ENCODE measurements at regions of chr3 and their contacts with region 1.

Region 1: DNA sequence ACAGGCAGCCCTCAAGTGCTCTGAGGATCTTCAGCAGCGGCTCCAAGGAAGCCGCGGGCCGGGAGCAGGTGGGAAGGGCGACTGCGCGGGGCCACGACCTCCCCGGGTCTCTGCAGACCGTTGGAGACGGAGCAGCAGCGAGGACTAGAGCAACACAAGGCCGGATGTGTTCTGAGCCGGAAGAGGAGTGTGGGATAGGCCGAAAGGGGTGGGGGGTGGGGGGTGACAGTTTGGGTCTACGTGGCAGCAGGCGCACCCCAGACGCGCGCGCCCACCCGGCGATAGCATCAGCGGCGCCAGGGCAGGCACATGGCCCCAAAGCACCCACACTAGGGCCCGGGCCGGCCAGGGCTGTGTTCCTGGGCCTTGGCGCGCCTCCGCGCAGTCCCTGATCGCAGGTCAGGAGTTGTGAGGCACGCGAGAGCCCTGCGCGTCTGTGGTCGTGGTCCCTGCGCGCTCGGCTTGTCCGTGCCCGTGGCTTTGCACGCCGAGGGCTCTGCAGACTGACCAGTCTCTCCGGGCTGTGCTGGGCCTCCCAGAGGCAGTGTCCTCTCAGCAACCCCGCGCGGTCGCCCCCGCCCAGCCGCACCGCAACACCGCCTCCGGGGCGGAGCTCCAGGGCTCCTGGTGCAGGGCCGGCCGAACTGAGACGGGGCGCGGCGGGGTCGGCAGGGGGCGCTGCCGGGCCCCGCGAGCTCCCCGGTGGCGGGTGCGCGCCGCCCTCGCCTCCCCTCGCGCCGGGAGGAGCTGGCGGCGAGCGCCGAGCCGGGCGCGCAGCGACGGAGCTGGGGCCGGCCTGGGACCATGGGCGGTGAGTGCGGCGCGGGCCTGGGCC is at the start of gene PXYLP1:
- DNase-seq: peak; percentile 95
- ATAC-seq: peak; percentile 92
- H3K4me3 Mint-ChIP-seq: peak within 1 kb of the TSS; percentile 94
- H3K27ac Mint-ChIP-seq: peak within 1 kb of the TSS; percentile 98
- H3K4me1 Mint-ChIP-seq: peaks cover 48% of the 10 kb centered on the region
- H3K27me3 Mint-ChIP-seq: no peaks in the 10 kb centered on the region
- total RNA-seq, gene PXYLP1: 10.3 to 12.2 TPM

Region 2: DNA sequence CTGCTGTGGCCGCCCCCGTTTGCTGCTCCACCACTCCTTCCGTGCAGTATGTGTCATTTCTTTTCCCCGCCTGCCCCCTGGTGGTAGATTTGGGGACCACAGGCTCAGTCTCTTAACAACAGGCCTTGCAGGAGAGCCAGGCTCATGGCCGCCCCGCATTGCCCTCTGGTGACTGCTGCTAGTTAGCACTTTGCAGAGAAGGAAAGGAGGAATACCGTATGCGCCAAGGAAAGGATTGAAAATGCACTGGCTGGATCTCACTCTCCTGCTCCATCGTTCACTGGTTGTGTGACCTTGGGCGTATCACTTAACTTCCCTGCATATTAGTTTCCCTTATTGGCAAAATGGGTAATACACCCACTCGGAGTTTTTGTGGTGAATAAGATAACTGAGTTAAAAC is 39.0 kb before region 1 on chr3:
- CTCF ChIA-PET with region 1: interaction called, 4 read pairs
- POLR2A ChIA-PET with region 1: no interaction called
- intact Hi-C with region 1: loop called in 1 of 2 experiments (anchors 1 kb)
- DNase-seq: peak; percentile 98
- ATAC-seq: peak; percentile 100
- H3K4me3 Mint-ChIP-seq: no peak overlapping the region
- H3K27ac Mint-ChIP-seq: no peak overlapping the region
- H3K4me1 Mint-ChIP-seq: peaks cover 13% of the 10 kb centered on the region
- H3K27me3 Mint-ChIP-seq: peaks cover 2% of the 10 kb centered on the region

Region 3: GRCh38 chr3:141266797-141267555 is 35.7 kb after region 1 on chr3:
- CTCF ChIA-PET with region 1: interaction called, 13 read pairs
- POLR2A ChIA-PET with region 1: interaction called, 9 read pairs
- intact Hi-C with region 1: no loop called
- DNase-seq: peak; percentile 58
- ATAC-seq: peak; percentile 80
- H3K4me3 Mint-ChIP-seq: peak overlapping the region; percentile 72
- H3K27ac Mint-ChIP-seq: peak overlapping the region; percentile 92
- H3K4me1 Mint-ChIP-seq: peaks cover 33% of the 10 kb centered on the region
- H3K27me3 Mint-ChIP-seq: no peaks in the 10 kb centered on the region

Region 4: GRCh38 chr3:141452036-141452435 is 220.7 kb after region 1 on chr3:
- CTCF ChIA-PET with region 1: interaction called, 6 read pairs
- POLR2A ChIA-PET with region 1: no interaction called
- intact Hi-C with region 1: loop called (anchors 2 to 5 kb)
- DNase-seq: peak; percentile 63
- ATAC-seq: peak; percentile 79
- H3K4me3 Mint-ChIP-seq: no peak overlapping the region
- H3K27ac Mint-ChIP-seq: no peak overlapping the region
- H3K4me1 Mint-ChIP-seq: peaks cover 22% of the 10 kb centered on the region
- H3K27me3 Mint-ChIP-seq: no peaks in the 10 kb centered on the region

Region 5: GRCh38 chr3:141875374-141875892 is 644.1 kb after region 1 on chr3:
- CTCF ChIA-PET with region 1: no interaction called
- POLR2A ChIA-PET with region 1: no interaction called
- intact Hi-C with region 1: loop called in 1 of 2 experiments (anchors 5 kb)
- DNase-seq: peak; percentile 92
- ATAC-seq: peak; percentile 73
- H3K4me3 Mint-ChIP-seq: peak overlapping the region; percentile 93
- H3K27ac Mint-ChIP-seq: peak overlapping the region; percentile 91
- H3K4me1 Mint-ChIP-seq: peaks cover 23% of the 10 kb centered on the region
- H3K27me3 Mint-ChIP-seq: no peaks in the 10 kb centered on the region